GM23248 (cell line): ENCODE measurements at regions of chr7 and their contacts with region 1.

Region 1: GRCh38 chr7:137606061-137606674 is 240.6 kb downstream of the DGKI start:
- DNase-seq: peak; percentile 64
- H3K4me3 ChIP-seq: no peak overlapping the region
- H3K27ac ChIP-seq: no peak overlapping the region
- H3K4me1 ChIP-seq: no peaks in the 10 kb centered on the region
- H3K27me3 ChIP-seq: no peaks in the 10 kb centered on the region

Region 2: GRCh38 chr7:137091396-137091795 is 514.8 kb before region 1 on chr7:
- in situ Hi-C with region 1: no loop called
- DNase-seq: no peak
- H3K4me3 ChIP-seq: no peak overlapping the region
- H3K27ac ChIP-seq: no peak overlapping the region
- H3K4me1 ChIP-seq: no peaks in the 10 kb centered on the region
- H3K27me3 ChIP-seq: no peaks in the 10 kb centered on the region

Region 3: GRCh38 chr7:137337902-137338301 is 268.3 kb before region 1 on chr7:
- in situ Hi-C with region 1: no loop called
- DNase-seq: no peak
- H3K4me3 ChIP-seq: no peak overlapping the region
- H3K27ac ChIP-seq: no peak overlapping the region
- H3K4me1 ChIP-seq: no peaks in the 10 kb centered on the region
- H3K27me3 ChIP-seq: no peaks in the 10 kb centered on the region

Region 4: DNA sequence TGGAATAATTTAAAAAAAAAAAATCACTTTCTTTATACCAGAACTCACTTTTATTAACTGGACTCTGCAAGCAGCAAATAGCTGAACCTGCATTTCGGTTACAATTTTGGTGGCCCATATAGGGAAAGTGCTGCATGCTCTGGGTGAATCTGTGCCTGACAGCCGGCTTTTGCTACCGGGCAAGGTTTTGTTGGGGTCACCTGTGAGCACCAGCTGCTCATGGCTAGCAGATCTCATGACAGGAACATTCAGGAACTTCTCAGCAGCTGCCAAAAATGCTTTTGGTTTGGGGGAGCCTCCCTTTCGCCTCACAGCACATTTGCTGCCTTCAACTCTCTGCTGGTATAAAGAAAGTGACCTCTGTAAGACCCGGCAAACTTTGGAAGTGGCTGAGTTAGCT is 408.9 kb after region 1 on chr7:
- in situ Hi-C with region 1: loop called (anchors 10 kb)
- DNase-seq: no peak
- H3K4me3 ChIP-seq: no peak overlapping the region
- H3K27ac ChIP-seq: no peak overlapping the region
- H3K4me1 ChIP-seq: no peaks in the 10 kb centered on the region
- H3K27me3 ChIP-seq: no peaks in the 10 kb centered on the region